ENCODE measurements at regions of chr7 and their contacts with region 1.

Region 1: GRCh38 chr7:12524794-12525386 is 45.6 kb upstream of the SCIN start:
- DNase-seq: no peak
- ATAC-seq: no peak
- H3K4me3 Mint-ChIP-seq: no peak overlapping the region
- H3K27ac Mint-ChIP-seq: no peak overlapping the region
- H3K4me1 Mint-ChIP-seq: no peaks in the 10 kb centered on the region
- H3K27me3 Mint-ChIP-seq: peaks cover 6% of the 10 kb centered on the region
- CTCF ChIP-seq: peak; percentile 59

Region 2: DNA sequence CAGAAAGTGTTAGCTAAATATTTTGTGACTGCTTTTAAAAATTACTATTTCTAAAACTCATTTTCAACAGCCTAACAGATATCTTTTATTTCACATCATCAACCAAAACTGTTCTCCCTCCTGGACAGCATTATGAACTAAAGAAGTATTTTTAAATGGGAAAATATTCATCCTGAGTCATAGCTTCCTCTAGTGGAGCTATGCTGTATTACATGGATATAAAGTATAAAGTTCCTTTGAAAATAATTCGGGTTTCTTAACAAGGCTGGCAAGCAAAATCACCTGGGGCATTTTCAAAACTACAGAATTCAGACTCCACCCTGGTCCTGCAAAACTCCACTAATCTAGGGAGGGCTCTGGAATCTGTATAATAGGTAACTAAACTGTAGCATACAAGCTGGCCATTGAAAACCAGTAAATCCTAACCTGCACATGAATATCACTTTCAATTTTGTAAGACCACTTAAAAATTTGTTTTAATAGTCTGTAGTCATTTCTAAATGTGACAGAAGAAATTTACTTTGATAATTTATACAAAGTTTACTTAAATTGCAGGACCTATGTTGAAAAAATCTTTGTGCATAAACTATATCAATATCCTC is 99.1 kb after region 1 on chr7:
- CTCF ChIA-PET with region 1: interaction called, 9 read pairs
- POLR2A ChIA-PET with region 1: no interaction called
- intact Hi-C with region 1: loop called (anchors 5 kb)
- DNase-seq: no peak
- ATAC-seq: no peak
- H3K4me3 Mint-ChIP-seq: no peak overlapping the region
- H3K27ac Mint-ChIP-seq: no peak overlapping the region
- H3K4me1 Mint-ChIP-seq: no peaks in the 10 kb centered on the region
- H3K27me3 Mint-ChIP-seq: peaks cover 5% of the 10 kb centered on the region
- CTCF ChIP-seq: no peak

Region 3: DNA sequence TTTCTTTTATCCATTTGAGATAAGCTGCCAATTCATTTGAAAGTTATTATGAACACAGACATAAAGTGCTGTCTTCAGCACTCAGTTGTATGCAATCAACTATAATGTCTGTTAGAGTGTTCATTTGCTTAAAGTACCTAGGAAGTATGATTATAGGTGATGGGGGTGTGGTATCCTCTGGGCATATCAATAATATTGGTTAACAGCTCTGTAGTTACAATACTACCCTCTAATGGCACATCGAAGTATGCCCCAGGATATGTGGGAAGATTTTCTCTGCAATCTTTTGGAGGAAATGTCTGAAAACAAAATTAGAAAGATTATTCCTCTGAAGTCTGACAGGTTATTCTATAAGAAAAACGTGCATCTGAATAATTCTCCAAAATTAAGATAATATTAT is 592.2 kb after region 1 on chr7:
- CTCF ChIA-PET with region 1: no interaction called
- POLR2A ChIA-PET with region 1: no interaction called
- intact Hi-C with region 1: loop called (anchors 2 kb)
- DNase-seq: no peak
- ATAC-seq: no peak
- H3K4me3 Mint-ChIP-seq: no peak overlapping the region
- H3K27ac Mint-ChIP-seq: no peak overlapping the region
- H3K4me1 Mint-ChIP-seq: no peaks in the 10 kb centered on the region
- H3K27me3 Mint-ChIP-seq: no peaks in the 10 kb centered on the region
- CTCF ChIP-seq: no peak

Region 4: DNA sequence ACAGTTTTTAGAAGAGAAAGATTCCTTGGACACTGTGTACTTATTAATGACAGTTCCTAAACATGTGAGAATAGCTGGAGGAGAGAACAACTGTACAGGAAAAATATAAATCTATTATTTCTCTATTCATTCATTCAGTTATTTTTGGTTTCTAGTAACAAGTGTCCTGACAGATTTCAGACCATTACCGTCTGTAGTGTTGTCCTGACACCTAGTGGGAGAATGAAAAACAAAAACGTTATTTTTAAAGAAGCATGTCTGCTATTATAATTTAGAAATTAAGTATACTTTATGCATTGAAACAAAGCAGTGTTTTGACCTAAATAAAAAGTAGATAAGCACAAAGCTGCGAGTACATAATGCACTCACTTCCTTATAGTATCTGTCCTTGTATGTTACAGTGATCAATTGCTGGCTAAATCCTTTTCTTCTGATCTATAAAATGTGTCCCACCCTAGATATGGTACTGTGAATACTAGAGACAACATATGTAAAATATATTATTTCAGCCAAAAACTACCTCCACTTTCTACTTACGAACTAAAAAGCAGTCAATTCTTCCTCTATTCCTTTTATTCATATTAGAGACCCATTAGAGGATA is 738.1 kb after region 1 on chr7:
- CTCF ChIA-PET with region 1: interaction called, 57 read pairs
- POLR2A ChIA-PET with region 1: no interaction called
- intact Hi-C with region 1: loop called (anchors 1 kb)
- DNase-seq: no peak
- ATAC-seq: no peak
- H3K4me3 Mint-ChIP-seq: no peak overlapping the region
- H3K27ac Mint-ChIP-seq: no peak overlapping the region
- H3K4me1 Mint-ChIP-seq: no peaks in the 10 kb centered on the region
- H3K27me3 Mint-ChIP-seq: peaks cover 3% of the 10 kb centered on the region
- CTCF ChIP-seq: peak; percentile 38

Region 5: DNA sequence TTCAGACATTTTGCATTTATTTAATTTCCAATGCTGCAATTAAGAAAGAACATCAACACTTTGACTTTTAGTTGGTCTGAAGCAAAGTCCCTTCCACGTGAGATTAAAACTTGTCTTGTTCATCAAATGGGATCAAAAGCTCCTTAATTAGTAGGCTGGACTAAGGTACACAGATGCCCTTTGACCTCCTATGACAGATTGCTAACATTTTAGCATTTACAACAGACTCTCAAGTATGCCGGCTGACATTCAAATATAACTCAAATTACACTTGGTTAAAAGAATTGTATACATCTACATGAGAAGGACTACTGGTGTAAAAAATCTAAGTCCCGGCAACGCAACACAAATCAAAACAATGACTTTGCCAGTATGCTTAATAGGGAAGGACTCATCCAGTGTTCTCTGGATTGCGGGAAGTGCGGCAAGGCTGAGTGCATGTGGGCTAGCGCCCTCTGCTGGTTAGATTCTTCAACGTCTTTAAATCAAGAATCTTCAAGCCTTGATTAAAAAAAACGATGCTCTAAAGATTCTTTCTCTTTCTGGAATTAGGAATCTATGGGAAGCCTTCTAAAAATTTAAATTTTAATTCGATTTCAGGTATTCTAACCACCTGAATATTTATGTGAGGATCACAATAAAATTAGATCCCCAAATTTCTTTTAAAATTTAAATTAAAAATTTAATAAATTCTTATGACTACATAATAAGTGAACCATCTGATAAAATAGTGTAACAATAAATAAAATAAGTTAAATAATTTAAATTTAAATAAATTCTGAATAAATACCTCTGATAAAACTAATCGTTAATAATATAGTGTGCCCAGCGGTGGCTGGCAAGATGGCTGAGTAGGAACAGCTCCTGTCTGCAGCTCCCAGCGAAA is 1932.9 kb after region 1 on chr7:
- CTCF ChIA-PET with region 1: interaction called, 3 read pairs
- POLR2A ChIA-PET with region 1: no interaction called
- intact Hi-C with region 1: loop called (anchors 1 kb)
- DNase-seq: no peak
- ATAC-seq: no peak
- H3K4me3 Mint-ChIP-seq: no peak overlapping the region
- H3K27ac Mint-ChIP-seq: no peak overlapping the region
- H3K4me1 Mint-ChIP-seq: no peaks in the 10 kb centered on the region
- H3K27me3 Mint-ChIP-seq: no peaks in the 10 kb centered on the region
- CTCF ChIP-seq: no peak